Aorta (tissue), 5 donors: ENCODE measurements at regions of chr22 and their contacts with region 1.

Region 1: GRCh38 chr22:37316875-37317371 is 34.6 kb downstream of the CYTH4 start:
- DNase-seq: peak; percentile 84
- ATAC-seq: peak; percentile 81
- H3K4me3 ChIP-seq: no peak overlapping the region
- H3K27ac ChIP-seq: no peak overlapping the region
- H3K4me1 ChIP-seq: no peaks in the 10 kb centered on the region
- H3K27me3 ChIP-seq: no peaks in the 10 kb centered on the region

Region 2: DNA sequence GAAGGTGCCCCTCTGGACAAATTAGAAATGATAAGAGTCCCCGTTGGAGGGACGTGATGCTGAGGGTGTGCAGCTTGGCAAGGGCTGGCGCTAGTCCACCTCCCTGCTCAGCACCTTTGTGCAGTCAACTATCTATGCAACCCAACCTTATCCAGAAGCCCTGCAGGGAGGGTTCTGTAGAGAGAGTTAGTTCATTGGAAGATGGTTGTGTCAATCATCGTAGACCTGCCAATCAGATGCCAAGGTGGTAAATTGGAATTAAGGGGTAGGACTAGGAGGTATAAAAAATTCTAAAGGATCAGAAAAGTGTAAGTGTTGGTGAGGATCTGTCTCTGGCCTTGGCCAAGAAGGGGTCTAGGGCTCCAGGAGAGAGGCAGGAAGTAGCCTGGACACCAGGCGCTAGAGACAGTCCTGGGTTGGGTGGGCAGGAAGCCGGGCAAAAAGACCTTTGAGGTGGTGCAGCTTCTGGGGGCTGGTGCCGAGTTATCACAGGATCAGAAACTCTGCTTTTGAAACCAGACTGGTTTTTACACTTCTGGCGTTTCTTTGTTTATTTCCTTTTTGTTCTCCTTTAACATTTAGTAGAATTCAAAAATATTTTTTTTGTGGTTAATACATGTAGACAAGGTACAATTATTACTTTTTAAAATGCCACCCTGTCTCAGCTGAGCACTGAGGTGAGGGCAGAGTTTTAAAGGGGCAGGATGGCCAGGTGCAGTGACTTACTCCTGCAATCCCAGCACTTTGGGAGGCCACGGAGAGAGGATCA is 130.5 kb before region 1 on chr22:
- intact Hi-C with region 1: no loop called
- DNase-seq: peak; percentile 42 to 51
- ATAC-seq: no peak
- H3K4me3 ChIP-seq: no peak overlapping the region
- H3K27ac ChIP-seq: no peak overlapping the region
- H3K4me1 ChIP-seq: no peaks in the 10 kb centered on the region
- H3K27me3 ChIP-seq: no peaks in the 10 kb centered on the region

Region 3: DNA sequence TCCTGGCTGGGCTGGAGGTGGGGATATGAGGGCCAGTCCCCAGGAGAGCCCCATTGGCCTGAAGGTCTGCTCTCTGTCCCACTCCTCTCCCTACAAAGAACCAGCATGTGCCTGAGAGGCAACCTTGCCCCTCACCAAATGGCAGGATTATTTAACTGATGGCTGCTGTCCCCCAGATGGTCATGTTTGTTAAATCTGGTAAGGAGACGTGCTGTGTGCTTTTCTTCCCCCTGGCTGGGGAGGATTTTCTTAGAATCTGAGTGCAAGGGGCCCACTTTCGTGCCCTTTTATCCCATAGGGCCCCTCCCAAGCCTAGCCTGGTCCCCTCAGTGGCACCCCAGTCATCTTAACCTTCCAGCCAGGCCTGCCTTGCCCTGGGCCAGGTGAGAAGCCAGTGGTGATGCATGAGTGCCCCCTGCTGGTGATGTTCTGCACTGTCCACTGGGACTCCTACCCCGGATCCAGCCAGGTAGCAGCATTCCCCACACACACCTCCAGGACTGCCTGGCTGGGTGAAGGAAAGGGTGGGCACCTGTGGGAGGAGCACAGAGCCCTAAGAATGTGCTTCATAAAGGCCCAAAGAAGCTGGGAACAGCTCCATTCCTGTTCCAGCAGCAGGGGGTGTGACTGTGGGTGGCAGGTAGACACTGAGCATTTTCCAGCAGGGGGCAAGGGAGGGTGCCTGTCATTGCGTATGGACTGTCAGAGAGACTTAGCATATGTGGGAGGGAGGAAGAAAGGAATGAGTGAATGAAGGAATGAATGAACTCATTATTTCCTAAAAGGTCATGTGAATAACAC is 140.4 kb after region 1 on chr22:
- intact Hi-C with region 1: loop called in 1 of 2 experiments (anchors 2 kb)
- DNase-seq: peak in 1 of 2 donors; percentile 71
- ATAC-seq: peak; percentile 66
- H3K4me3 ChIP-seq: no peak overlapping the region
- H3K27ac ChIP-seq: no peak overlapping the region
- H3K4me1 ChIP-seq: no peaks in the 10 kb centered on the region
- H3K27me3 ChIP-seq: no peaks in the 10 kb centered on the region